MCF 10A (cell line): ENCODE measurements at regions of chr19 and their contacts with region 1.

Region 1: DNA sequence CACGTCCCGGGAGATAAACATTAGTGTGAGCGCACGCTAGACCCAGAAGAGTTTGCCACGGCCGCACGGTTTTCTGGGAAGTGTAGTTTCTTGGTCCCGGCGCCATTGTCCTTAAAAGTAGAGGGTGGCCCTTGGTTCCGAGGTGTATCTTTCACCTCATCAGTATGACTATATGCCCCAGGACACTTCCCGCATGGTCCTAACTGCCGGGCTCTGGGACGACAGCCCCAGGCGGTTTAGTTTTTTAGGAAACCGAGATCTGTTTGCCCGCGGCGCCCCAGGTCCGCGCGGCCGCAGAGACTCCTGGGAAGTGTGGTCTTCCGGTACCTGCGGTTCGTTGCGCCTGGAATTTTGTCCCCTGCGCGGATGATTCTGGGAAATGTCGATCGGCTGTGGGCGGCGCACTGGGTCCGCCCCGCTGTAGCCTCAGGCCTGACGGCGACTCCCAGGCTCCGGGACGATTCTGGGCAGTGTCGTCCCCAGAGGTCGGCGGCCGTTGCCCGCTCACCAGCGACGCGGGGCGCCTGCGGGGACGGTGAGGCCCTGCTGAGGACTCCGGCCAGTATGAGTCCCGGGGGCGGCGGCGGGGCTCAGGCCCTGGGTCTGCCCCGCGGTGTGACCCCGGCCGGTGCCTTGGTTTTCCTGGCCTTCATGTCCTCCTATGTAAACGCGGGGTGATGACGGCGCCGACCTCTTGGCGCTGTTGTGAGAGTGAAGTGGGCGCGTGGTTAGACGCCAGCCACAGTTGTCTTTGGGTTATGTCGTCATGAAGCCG is at the start of gene ZNF181:
- DNase-seq: peak; percentile 91
- H3K4me3 Mint-ChIP-seq: peak within 1 kb of the TSS; percentile 86
- H3K27ac Mint-ChIP-seq: peak within 1 kb of the TSS; percentile 94
- H3K4me1 Mint-ChIP-seq: peaks cover 10% of the 10 kb centered on the region
- H3K27me3 Mint-ChIP-seq: no peaks in the 10 kb centered on the region
- CTCF ChIP-seq: no peak
- total RNA-seq, gene ZNF181: 8.1 and 9.0 TPM in 2 replicates

Region 2: DNA sequence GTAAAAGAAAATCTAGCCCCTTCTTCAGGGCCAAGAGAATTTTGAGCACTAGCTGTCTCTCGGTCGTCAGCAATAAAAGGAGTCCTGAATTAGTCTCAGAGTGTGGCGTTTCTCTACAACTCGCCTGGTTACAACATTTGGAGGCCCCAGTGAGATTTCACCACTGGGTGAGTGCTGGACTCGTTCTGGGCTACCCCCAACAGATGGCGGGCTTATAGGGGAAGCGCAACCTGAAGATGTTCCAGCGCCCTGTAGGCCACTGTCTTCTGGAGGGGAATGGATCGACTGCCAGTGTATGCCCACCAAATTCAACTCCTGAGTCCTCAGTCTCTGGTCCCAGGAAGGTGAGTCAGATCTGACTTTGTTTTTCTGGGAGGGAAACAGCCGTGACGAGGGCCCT is 11.7 kb before region 1 on chr19:
- CTCF ChIA-PET with region 1: no interaction called
- POLR2A ChIA-PET with region 1: no interaction called
- intact Hi-C with region 1: no loop called
- DNase-seq: no peak
- H3K4me3 Mint-ChIP-seq: no peak overlapping the region
- H3K27ac Mint-ChIP-seq: no peak overlapping the region
- H3K4me1 Mint-ChIP-seq: no peaks in the 10 kb centered on the region
- H3K27me3 Mint-ChIP-seq: peaks cover 37% of the 10 kb centered on the region
- CTCF ChIP-seq: no peak

Region 3: GRCh38 chr19:34772697-34773554 is 38.9 kb after region 1 on chr19 and contains the start of gene ZNF599:
- CTCF ChIA-PET with region 1: interaction called, 4 read pairs
- POLR2A ChIA-PET with region 1: interaction called, 5 read pairs
- intact Hi-C with region 1: loop called (anchors 2 kb)
- DNase-seq: peak; percentile 91
- H3K4me3 Mint-ChIP-seq: peak within 1 kb of the TSS; percentile 93
- H3K27ac Mint-ChIP-seq: peak within 1 kb of the TSS; percentile 84
- H3K4me1 Mint-ChIP-seq: peaks cover 13% of the 10 kb centered on the region
- H3K27me3 Mint-ChIP-seq: no peaks in the 10 kb centered on the region
- CTCF ChIP-seq: no peak
- total RNA-seq, gene ZNF599: 4.1 and 4.6 TPM in 2 replicates

Region 4: GRCh38 chr19:34926685-34927375 is 192.8 kb after region 1 on chr19 and contains the start of gene ZNF30:
- CTCF ChIA-PET with region 1: no interaction called
- POLR2A ChIA-PET with region 1: interaction called, 11 read pairs
- intact Hi-C with region 1: loop called (anchors 2 kb)
- DNase-seq: peak; percentile 88
- H3K4me3 Mint-ChIP-seq: peak within 1 kb of the TSS; percentile 94
- H3K27ac Mint-ChIP-seq: peak within 1 kb of the TSS; percentile 71
- H3K4me1 Mint-ChIP-seq: peaks cover 4% of the 10 kb centered on the region
- H3K27me3 Mint-ChIP-seq: no peaks in the 10 kb centered on the region
- CTCF ChIP-seq: no peak
- total RNA-seq, gene ZNF30: 2.3 and 4.0 TPM in 2 replicates